ENCODE measurements at regions of chr19 and their contacts with region 1.

Region 1: GRCh38 chr19:35352448-35353304 is 5.0 kb downstream of the FFAR1 start:
- DNase-seq: peak; percentile 73
- H3K4me3 ChIP-seq: no peak overlapping the region
- H3K27ac ChIP-seq: no peak overlapping the region
- H3K4me1 ChIP-seq: no peaks in the 10 kb centered on the region
- H3K27me3 ChIP-seq: no peaks in the 10 kb centered on the region
- CTCF ChIP-seq: peak; percentile 73 to 88 (median 78)
- EP300 ChIP-seq: no peak
- POLR2A ChIP-seq: no peak

Region 2: GRCh38 chr19:35293363-35293739 is 59.3 kb before region 1 on chr19:
- in situ Hi-C with region 1: no loop called
- intact Hi-C with region 1: no loop called
- DNase-seq: no peak
- H3K4me3 ChIP-seq: no peak overlapping the region
- H3K27ac ChIP-seq: no peak overlapping the region
- H3K4me1 ChIP-seq: no peaks in the 10 kb centered on the region
- H3K27me3 ChIP-seq: peaks cover 35% of the 10 kb centered on the region
- CTCF ChIP-seq: no peak
- EP300 ChIP-seq: no peak
- POLR2A ChIP-seq: no peak

Region 3: DNA sequence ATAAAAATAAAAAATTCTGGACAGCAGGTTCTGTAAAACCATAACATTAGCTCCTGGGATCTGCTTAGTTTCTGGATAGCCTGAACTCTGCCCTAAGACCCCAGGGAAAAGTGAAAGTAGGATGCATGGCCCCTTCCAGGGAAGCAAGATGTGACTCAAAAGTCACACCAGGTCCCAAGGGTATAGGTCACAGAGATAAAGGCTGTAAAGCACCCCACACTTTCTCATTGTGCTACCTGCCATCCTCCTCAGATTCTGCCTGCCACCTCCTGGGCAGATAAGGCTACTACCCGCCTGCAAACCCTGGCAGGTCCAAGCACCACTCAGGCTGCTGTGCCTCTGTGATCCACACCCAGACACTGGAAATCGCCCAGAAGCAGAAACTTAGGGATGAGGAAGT is 116.0 kb after region 1 on chr19:
- in situ Hi-C with region 1: loop called in 2 of 4 experiments (anchors 10 to 25 kb)
- intact Hi-C with region 1: no loop called
- DNase-seq: peak; percentile 71
- H3K4me3 ChIP-seq: no peak overlapping the region
- H3K27ac ChIP-seq: no peak overlapping the region
- H3K4me1 ChIP-seq: no peaks in the 10 kb centered on the region
- H3K27me3 ChIP-seq: no peaks in the 10 kb centered on the region
- CTCF ChIP-seq: peak; percentile 51 to 81 (median 68)
- EP300 ChIP-seq: no peak
- POLR2A ChIP-seq: no peak